Activated B cell treated with CpG ODN at 0.5 μM for 24 hours (primary cell): ENCODE measurements at regions of chr4 and their contacts with region 1.

Region 1: DNA sequence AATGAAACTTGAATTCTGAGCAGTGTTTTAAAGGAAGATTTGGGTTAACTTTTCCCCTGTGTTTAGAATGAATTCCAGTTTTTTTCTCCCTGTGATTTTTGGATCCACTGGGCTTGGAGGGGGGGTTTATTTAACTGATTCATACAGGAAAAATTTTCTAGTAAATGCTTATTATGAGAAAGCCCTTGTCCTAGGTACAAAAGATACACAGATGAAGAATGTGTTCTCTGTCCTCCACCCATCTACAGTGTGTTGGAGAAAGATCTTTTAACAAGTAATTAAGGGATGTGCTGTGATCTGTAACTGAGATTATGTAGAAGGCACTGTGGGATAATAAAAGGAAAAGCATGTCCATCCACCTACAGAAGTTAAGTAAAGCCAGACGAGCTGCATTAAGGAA is 103.9 kb downstream of the STIM2 start:
- DNase-seq: no peak
- ATAC-seq: no peak
- H3K4me3 Mint-ChIP-seq: no peak overlapping the region
- H3K27ac Mint-ChIP-seq: no peak overlapping the region
- H3K4me1 Mint-ChIP-seq: peaks cover 53% of the 10 kb centered on the region
- H3K27me3 Mint-ChIP-seq: no peaks in the 10 kb centered on the region
- CTCF ChIP-seq: no peak

Region 2: DNA sequence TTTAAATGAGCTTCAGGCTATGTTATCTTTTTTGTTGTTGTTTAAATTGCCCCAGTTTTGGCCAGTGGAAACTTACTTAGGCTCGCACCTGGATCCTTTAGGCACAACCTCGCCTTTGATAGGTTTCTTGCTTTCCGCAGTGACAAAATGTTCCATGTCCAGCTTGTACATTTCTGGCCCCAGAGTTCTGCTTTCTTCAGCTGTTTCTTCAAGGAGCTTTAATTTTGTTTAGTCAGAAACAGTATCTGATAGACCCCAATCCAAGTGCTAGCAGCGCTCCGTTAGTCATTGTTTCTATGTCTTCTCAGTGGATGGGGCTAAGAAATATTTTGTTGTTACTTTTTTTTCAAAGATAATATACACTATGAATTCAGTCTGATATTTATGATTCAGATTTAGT is 21.1 kb before region 1 on chr4:
- CTCF ChIA-PET with region 1: no interaction called
- POLR2A ChIA-PET with region 1: no interaction called
- intact Hi-C with region 1: loop called (anchors 2 kb)
- DNase-seq: no peak
- ATAC-seq: no peak
- H3K4me3 Mint-ChIP-seq: no peak overlapping the region
- H3K27ac Mint-ChIP-seq: no peak overlapping the region
- H3K4me1 Mint-ChIP-seq: peaks cover 67% of the 10 kb centered on the region
- H3K27me3 Mint-ChIP-seq: no peaks in the 10 kb centered on the region
- CTCF ChIP-seq: no peak

Region 3: GRCh38 chr4:26978387-26979053 is 14.0 kb after region 1 on chr4:
- CTCF ChIA-PET with region 1: no interaction called
- POLR2A ChIA-PET with region 1: no interaction called
- intact Hi-C with region 1: loop called (anchors 2 kb)
- DNase-seq: no peak
- ATAC-seq: peak; percentile 49
- H3K4me3 Mint-ChIP-seq: peak overlapping the region; percentile 28
- H3K27ac Mint-ChIP-seq: peak overlapping the region; percentile 77
- H3K4me1 Mint-ChIP-seq: peaks cover 42% of the 10 kb centered on the region
- H3K27me3 Mint-ChIP-seq: no peaks in the 10 kb centered on the region
- CTCF ChIP-seq: no peak